ENCODE measurements at regions of chr18 and their contacts with region 1.

Region 1: DNA sequence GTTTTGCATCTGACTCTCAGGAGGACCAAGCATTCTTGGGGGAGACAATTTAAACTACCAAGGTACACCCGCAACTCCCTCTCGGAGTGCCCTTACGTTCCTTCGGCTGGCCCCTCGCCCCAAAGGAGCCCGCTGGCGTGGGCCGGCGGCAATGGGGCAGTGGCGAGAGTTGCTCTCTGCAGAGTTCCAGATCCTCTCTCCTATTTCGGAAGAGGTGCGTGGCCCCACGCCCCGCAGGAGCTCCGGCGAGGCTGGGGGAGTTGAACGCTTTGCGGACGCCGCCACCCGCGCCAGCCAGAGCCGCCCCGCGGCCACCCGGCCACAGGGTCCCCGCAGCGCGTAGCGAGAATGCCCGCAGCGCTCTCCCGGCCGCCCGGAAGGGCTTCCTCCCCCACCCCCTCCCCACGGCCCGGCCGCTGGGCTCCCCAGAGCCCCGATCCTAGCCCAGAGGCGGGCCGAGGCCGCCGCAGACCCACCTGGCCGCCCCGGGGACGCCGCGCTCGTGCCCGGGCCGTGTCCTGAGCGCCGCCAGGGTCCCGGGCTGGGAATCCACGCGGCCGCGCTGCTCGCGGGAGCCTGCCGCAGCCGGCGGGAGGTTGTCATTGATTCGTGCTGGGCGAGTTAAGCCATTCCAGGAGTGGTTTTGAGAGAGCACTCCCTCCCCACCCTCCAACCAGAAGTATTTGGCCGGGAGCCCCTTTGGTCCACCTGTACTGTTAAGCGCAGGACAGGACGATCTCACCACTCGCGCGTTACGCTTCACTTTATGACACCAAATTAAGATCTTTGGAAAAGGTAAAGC is 206.3 kb upstream of the SMAD2 start:
- DNase-seq: no peak

Region 2: DNA sequence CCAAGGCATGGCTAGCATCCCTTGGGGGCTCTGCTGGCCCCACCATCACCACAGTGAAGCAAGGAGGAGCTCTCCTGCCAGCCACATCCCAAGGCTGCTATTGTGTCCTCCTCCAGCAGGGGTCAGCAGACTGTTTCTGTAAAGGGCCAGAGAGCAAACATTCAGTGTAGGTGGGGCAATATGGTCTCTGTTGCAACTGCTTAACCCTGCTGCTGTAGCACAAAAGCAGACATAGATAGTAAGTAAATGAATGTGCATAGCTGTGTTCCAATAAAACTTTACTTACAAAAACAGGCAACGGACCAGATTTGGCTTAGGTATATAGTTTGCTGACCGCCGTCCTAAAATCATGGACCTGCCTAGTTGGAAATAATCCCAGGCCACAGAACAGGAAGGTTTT is 308.8 kb after region 1 on chr18:
- intact Hi-C with region 1: loop called (anchors 10 kb)
- DNase-seq: peak; percentile 89

Region 3: GRCh38 chr18:48455555-48456478 is 319.1 kb after region 1 on chr18:
- intact Hi-C with region 1: loop called in 1 of 2 experiments (anchors 10 kb)
- DNase-seq: no peak

Region 4: GRCh38 chr18:49731860-49732311 is 1595.2 kb after region 1 on chr18:
- intact Hi-C with region 1: loop called in 1 of 2 experiments (anchors 5 kb)
- DNase-seq: no peak

Measured in posterior vena cava (tissue), 2 donors.